T47D (cell line): ENCODE measurements at regions of chr5 and their contacts with region 1.

Region 1: GRCh38 chr5:1315709-1316587 is 21.1 kb upstream of the TERT start:
- DNase-seq: peak; percentile 86 to 100

Region 2: DNA sequence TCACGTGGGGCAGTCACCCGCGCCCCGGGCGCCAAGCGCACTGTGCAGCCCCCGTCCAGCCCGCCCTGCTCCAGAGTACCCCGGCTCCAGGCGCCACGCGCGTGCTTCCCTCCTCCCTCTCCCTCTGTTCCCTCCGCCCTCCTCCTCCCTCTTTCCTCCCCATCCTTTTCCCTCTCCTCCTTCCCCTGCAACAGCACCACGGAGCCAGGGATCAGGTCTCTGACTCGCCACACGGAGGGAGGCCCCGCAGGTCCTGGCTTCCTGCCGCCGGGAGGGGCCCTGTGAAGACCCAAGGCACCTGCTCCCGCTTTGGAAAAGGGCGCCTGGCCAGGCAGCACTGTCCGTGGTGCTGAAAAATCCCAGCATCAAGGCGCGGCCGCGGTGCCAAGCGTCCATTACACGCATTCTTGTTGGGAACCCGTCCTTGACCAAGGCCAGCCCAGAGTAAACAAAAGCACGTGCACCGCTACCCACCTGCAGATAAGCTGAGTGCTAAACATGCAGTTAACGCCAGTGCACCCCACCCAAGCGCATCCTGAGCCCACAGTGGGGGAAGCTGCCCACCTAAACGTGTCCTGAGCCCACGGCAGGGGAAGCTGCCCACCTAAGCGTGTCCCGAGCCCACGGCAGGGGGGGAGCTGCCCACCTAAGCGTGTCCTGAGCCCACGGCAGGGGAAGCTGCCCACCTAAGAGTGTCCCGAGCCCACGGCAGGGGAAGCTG is 69.1 kb before region 1 on chr5:
- in situ Hi-C with region 1: loop called (anchors 10 kb)
- DNase-seq: peak; percentile 92 to 97

Region 3: GRCh38 chr5:1522908-1523770 is 207.2 kb after region 1 on chr5:
- in situ Hi-C with region 1: no loop called
- DNase-seq: peak in 1 of 2 experiments; percentile 32